CD14-positive monocyte (primary cell): ENCODE measurements at regions of chr7 and their contacts with region 1.

Region 1: DNA sequence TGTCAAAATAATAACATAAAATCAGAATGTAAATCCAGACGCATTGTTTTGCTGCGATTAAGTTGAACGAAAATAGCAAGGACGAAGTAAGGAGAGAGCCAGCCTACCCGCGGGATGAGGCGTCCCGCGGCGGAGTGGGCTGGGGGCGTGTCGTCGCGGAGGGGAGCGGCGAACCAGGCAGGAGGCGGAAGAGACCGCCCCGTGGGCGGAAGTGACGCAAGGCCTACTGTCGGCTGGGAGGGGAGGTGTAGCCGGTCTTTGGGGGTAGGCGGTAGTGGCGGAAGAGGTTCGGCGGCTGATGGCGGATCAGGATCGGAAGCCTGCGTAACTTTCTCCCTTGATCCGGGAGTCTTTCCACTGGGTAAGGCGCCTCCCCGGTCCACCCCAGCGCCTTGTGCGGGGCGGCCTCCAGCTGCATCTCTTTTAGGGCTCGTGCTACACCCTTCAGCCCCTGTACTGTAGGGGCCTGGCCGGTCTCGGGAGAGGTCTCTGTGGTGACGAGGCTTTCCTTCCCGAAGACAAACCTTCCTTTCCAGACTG is at the start of gene TAX1BP1:
- DNase-seq: peak; percentile 92 to 95 (median 94)
- H3K4me3 ChIP-seq: peak within 1 kb of the TSS; percentile 78 to 100 (median 81)
- H3K4me3 Mint-ChIP-seq: peak within 1 kb of the TSS; percentile 97
- H3K27ac ChIP-seq: peak within 1 kb of the TSS; percentile 92 to 99
- H3K27ac Mint-ChIP-seq: peak within 1 kb of the TSS; percentile 98 to 100 (median 99)
- H3K4me1 ChIP-seq: peaks cover 17 to 20% of the 10 kb centered on the region in 2 donors
- H3K4me1 Mint-ChIP-seq: peaks cover 34% of the 10 kb centered on the region
- H3K27me3 ChIP-seq: no peaks in the 10 kb centered on the region
- H3K27me3 Mint-ChIP-seq: peaks cover 0 to 3% (median 2%) of the 10 kb centered on the region in 3 donors
- CTCF ChIP-seq: no peak
- polyA plus RNA-seq, gene TAX1BP1: 62.6 to 106 (median 85.3) TPM

Region 2: DNA sequence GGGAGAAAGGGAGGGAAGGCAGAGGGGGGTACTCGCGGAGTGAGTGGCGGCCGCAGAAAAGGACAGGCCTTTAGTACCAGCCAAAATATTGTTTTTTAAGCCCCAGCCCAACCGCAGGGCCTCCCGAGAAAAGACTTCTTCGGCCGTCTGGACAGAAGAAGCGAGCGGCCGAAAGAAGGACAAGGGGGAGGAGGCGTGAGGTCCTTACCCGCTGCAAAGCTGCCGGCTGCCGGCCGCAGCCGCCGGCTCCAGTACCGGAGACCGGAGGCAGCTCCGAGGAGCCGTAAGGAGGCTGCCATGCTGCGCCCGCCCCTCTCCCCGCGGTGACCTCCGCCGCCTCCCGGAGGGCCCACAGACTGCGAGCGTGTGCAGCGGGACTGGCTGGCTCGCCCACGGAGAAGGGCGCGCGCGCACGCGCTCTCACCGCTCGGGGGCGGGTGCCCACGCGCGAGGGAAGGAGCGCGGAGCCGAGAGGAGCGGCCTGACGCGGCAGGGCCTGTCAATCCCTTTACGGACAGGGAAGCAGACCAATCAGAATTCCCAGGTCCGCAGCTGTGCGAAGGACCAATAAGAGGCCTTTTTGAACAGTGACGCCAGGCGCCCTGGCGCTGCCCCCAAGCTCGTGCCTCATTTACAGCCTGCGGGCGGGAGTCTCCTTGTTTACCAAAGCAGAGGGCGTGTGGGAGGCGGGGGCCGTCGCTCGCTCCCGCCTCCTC is 77.3 kb before region 1 on chr7 and contains the start of gene HIBADH:
- intact Hi-C with region 1: loop called (anchors 2 kb)
- DNase-seq: peak; percentile 99 to 100 (median 99)
- H3K4me3 ChIP-seq: peak within 1 kb of the TSS; percentile 62 to 95 (median 85)
- H3K4me3 Mint-ChIP-seq: peak within 1 kb of the TSS; percentile 88
- H3K27ac ChIP-seq: peak within 1 kb of the TSS; percentile 73 to 75
- H3K27ac Mint-ChIP-seq: peak within 1 kb of the TSS; percentile 80 to 91 (median 86)
- H3K4me1 ChIP-seq: peaks cover 19 to 25% of the 10 kb centered on the region in 2 donors
- H3K4me1 Mint-ChIP-seq: peaks cover 18% of the 10 kb centered on the region
- H3K27me3 ChIP-seq: no peaks in the 10 kb centered on the region
- H3K27me3 Mint-ChIP-seq: peaks cover 0 to 1% (median 0%) of the 10 kb centered on the region in 3 donors
- CTCF ChIP-seq: peak; percentile 16
- polyA plus RNA-seq, gene HIBADH: 8.9 to 29.1 (median 26.5) TPM

Region 3: DNA sequence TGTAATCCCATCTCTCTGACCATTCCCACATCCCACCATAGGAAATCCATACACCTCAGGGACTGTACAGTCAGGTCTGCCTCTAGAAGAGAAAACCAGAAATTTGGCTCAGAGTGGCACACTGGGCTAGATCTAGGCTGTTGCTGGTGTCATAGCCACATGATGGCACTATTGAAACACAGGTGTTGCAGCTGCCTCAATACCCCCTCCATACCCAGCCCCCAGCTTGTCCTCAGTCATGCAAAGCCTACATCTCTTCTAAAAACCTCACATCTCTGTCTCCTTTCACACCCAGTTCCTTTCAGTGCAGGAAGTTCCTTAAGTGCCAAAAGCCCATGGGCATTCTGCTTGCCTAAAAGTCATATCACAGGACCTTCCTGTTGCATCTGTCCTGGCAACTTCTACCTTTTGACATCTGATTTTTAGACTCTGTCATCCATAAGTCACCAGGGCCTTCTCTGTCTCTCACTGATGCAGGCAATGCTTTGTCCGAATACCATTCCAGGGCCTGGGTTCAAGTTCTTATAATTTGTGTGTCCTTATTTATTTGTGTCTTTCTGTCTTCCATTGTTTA is 50.3 kb before region 1 on chr7:
- intact Hi-C with region 1: loop called in 1 of 2 experiments (anchors 10 kb)
- DNase-seq: peak in 2 of 3 donors; percentile 21 to 25
- H3K4me3 ChIP-seq: no peak overlapping the region
- H3K4me3 Mint-ChIP-seq: no peak overlapping the region
- H3K27ac ChIP-seq: no peak overlapping the region
- H3K27ac Mint-ChIP-seq: peak overlapping the region in 1 of 7 donors; percentile 12
- H3K4me1 ChIP-seq: peaks cover 13 to 15% of the 10 kb centered on the region in 2 donors
- H3K4me1 Mint-ChIP-seq: peaks cover 11% of the 10 kb centered on the region
- H3K27me3 ChIP-seq: no peaks in the 10 kb centered on the region
- H3K27me3 Mint-ChIP-seq: peaks cover 0 to 2% (median 0%) of the 10 kb centered on the region in 3 donors
- CTCF ChIP-seq: peak; percentile 15

Region 4: GRCh38 chr7:27750316-27750715 is 10.3 kb after region 1 on chr7:
- intact Hi-C with region 1: no loop called
- DNase-seq: no peak
- H3K4me3 ChIP-seq: no peak overlapping the region
- H3K4me3 Mint-ChIP-seq: no peak overlapping the region
- H3K27ac ChIP-seq: no peak overlapping the region
- H3K27ac Mint-ChIP-seq: peak overlapping the region in 1 of 7 donors; percentile 11
- H3K4me1 ChIP-seq: no peaks in the 10 kb centered on the region
- H3K4me1 Mint-ChIP-seq: peaks cover 7% of the 10 kb centered on the region
- H3K27me3 ChIP-seq: no peaks in the 10 kb centered on the region
- H3K27me3 Mint-ChIP-seq: no peaks in the 10 kb centered on the region
- CTCF ChIP-seq: no peak